Lower leg skin (tissue), 4 donors: ENCODE measurements at regions of chr6 and their contacts with region 1.

Region 1: DNA sequence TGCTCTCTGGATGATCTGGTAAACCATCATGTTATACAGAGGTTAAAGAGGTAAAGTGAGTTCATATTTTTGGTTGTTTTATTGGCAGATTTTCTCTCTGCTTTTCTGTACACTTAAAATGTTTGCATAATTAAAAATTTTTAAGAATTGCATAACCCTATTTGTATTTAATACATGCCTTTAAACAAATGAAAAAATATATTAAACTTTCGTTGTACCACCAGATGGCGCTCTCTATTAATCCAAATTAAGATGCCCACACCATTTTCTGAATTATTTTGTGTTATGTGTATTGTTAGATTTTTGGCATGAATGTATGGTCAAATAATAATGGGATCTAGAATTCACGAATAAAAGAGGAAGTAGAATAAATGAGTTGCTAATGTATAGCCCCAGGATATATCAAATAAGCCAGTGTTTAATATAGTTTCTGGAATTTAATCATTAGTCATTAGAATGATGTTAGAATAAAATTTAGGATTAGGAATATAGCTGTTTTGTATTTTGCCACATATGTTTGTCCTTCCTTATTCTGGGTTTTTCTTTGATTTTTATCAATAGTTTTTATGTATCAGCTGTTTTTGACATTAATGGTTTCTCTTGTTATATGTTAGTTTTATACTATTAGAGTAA is 38.9 kb downstream of the SMAP1 start:
- DNase-seq: no peak
- H3K4me3 ChIP-seq: no peak overlapping the region
- CTCF ChIP-seq: no peak
- POLR2A ChIP-seq: no peak

Region 2: DNA sequence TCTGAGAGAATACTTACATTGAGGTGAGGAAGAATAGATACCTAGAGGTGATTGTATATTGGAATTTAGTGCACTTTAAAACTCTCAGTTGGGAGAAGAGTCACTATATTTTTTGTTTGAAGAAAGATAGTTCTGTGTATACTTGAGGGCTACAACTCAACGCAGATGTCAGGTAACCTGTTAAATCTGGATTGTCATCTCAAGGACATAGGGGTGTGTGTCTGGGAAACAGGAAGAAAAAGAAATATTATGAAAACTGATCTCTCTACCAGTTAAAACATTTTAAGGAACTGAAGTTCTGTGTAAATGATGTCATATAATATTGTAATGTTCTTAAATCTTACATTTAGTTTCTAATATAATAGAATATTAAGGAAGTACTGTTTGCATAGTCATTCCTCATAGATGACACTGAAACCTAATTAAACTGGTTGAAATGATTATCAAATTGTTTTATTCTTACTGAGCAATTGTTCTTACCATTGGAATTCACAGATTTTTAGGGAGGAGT is 47.3 kb after region 1 on chr6:
- intact Hi-C with region 1: no loop called
- DNase-seq: no peak
- H3K4me3 ChIP-seq: no peak overlapping the region
- CTCF ChIP-seq: no peak
- POLR2A ChIP-seq: no peak

Region 3: DNA sequence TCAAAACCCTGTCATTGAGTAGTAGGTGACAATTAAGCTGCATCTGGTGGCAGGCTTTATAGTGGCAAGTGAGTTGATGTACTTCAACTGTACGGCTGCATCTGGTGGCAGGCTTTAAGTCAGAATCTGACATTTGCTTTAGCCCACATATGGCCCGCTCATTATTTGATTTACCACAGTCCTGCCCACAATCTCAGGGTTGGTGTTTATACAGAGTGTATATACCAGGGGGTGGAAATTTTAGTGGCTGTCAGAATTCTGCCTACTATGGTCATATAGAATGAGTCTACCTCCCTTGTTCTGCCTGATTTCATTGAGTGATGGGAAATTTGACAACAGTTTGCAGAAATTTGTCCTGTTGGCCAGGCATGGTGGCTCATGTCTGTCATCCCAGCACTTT is 73.3 kb after region 1 on chr6:
- intact Hi-C with region 1: no loop called
- DNase-seq: no peak
- H3K4me3 ChIP-seq: no peak overlapping the region
- CTCF ChIP-seq: no peak
- POLR2A ChIP-seq: no peak

Region 4: DNA sequence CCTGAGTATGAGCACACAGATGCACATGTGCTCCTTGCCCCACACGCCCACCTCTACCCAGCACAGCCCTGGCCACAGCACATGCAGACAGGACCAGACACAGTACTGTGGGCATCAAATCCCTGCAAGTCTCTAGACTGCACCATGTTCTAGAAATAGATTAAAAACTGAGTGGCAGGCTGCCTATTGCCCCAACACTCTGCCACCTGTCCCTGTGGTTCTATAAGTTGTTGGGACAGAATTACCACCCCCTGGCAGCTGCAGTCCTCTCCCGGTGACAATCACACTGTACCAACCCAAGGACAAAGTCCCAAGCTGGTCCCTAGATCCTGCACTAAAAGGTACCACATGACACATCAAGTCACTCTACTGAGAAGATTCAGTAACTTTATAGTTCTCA is 180.1 kb after region 1 on chr6:
- intact Hi-C with region 1: loop called (anchors 5 kb)
- DNase-seq: no peak
- H3K4me3 ChIP-seq: no peak overlapping the region
- CTCF ChIP-seq: no peak
- POLR2A ChIP-seq: no peak